Caco-2 (cell line): ENCODE measurements at regions of chr1 and their contacts with region 1.

Region 1: GRCh38 chr1:72845342-72845741 is 563.0 kb upstream of the NEGR1 start:
- DNase-seq: peak; percentile 14 to 36
- H3K4me3 ChIP-seq: no peak overlapping the region
- H3K4me3 Mint-ChIP-seq: no peak overlapping the region
- H3K27ac Mint-ChIP-seq: no peak overlapping the region
- H3K4me1 ChIP-seq: no peaks in the 10 kb centered on the region
- H3K4me1 Mint-ChIP-seq: no peaks in the 10 kb centered on the region
- H3K27me3 ChIP-seq: no peaks in the 10 kb centered on the region
- H3K27me3 Mint-ChIP-seq: peaks cover 2% of the 10 kb centered on the region
- CTCF ChIP-seq: peak; percentile 17 to 20

Region 2: DNA sequence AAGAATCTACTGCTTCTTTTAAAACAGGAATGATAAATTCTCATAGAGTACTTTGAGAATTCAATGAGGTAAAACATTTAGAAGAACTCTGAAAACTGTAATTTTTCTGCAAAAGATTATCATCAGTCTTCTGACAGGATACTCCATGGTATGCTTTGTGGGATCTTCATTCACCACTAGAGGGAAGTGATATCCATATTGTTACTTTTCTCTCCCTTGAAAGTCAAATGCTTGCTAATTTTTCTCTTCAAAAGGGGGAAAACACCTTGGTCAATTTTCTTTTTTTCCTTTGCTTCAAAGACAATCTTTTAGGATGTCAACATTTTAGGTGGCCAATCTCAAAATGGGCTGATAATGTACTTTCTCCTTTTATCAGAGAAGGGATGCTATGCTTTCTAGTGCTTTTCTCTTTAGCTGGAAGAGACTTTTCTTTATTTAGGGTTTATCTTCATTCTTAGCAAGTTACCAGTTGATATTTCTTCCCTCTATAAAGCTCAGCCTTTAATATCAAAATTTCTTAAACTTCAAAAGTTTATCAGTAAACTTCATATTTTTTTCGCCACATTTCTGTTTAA is 658.5 kb before region 1 on chr1:
- CTCF ChIA-PET with region 1: no interaction called
- POLR2A ChIA-PET with region 1: no interaction called
- intact Hi-C with region 1: loop called (anchors 10 kb)
- DNase-seq: no peak
- H3K4me3 ChIP-seq: no peak overlapping the region
- H3K4me3 Mint-ChIP-seq: no peak overlapping the region
- H3K27ac Mint-ChIP-seq: no peak overlapping the region
- H3K4me1 ChIP-seq: no peaks in the 10 kb centered on the region
- H3K4me1 Mint-ChIP-seq: no peaks in the 10 kb centered on the region
- H3K27me3 ChIP-seq: no peaks in the 10 kb centered on the region
- H3K27me3 Mint-ChIP-seq: no peaks in the 10 kb centered on the region
- CTCF ChIP-seq: peak; percentile 34 to 44

Region 3: DNA sequence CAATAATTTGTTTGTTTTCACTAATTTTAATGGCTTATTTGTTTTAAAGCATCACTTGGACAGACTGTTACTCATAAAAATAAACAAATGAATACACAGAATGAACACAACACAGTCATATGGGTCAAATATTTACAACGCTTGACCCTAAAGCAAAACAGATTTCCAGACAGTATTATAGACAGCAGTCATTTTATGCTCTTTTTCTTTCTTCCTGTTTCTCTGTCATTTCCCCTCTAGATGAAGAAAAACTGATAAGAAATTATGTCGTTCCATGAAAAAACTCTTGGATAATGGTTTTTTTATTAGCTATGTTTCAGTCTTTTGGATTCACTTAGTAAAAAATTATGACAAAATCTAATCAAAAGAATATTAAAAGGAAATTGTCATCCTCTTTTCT is 265.7 kb before region 1 on chr1:
- CTCF ChIA-PET with region 1: no interaction called
- POLR2A ChIA-PET with region 1: no interaction called
- intact Hi-C with region 1: no loop called
- DNase-seq: no peak
- H3K4me3 ChIP-seq: no peak overlapping the region
- H3K4me3 Mint-ChIP-seq: no peak overlapping the region
- H3K27ac Mint-ChIP-seq: no peak overlapping the region
- H3K4me1 ChIP-seq: no peaks in the 10 kb centered on the region
- H3K4me1 Mint-ChIP-seq: no peaks in the 10 kb centered on the region
- H3K27me3 ChIP-seq: no peaks in the 10 kb centered on the region
- H3K27me3 Mint-ChIP-seq: no peaks in the 10 kb centered on the region
- CTCF ChIP-seq: no peak

Region 4: DNA sequence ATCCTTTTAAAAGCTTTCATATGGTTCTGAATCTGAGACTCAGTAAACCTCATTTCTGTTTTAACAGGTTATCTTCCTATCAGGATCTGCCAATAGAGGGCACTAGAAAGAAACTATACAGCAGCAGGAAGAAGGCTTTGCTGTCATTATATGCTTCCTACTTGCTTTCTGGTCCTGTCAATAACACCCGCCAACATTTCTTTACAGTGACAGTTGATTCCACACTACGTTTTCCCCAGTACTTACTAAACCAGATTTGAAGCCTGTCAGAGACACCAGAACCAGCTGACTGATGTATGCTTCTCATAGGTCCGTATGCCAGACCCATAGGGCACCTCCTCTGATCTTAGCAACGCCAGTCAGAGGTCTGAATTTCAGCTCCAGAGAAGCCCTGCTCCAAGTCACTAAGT is 222.0 kb before region 1 on chr1:
- CTCF ChIA-PET with region 1: no interaction called
- POLR2A ChIA-PET with region 1: no interaction called
- intact Hi-C with region 1: loop called (anchors 5 kb)
- DNase-seq: peak in 1 of 2 experiments; percentile 17
- H3K4me3 ChIP-seq: no peak overlapping the region
- H3K4me3 Mint-ChIP-seq: no peak overlapping the region
- H3K27ac Mint-ChIP-seq: no peak overlapping the region
- H3K4me1 ChIP-seq: no peaks in the 10 kb centered on the region
- H3K4me1 Mint-ChIP-seq: no peaks in the 10 kb centered on the region
- H3K27me3 ChIP-seq: no peaks in the 10 kb centered on the region
- H3K27me3 Mint-ChIP-seq: no peaks in the 10 kb centered on the region
- CTCF ChIP-seq: peak; percentile 24 to 53

Region 5: GRCh38 chr1:72724951-72725861 is 120.1 kb before region 1 on chr1:
- CTCF ChIA-PET with region 1: no interaction called
- POLR2A ChIA-PET with region 1: no interaction called
- intact Hi-C with region 1: loop called (anchors 1 kb)
- DNase-seq: no peak
- H3K4me3 ChIP-seq: no peak overlapping the region
- H3K4me3 Mint-ChIP-seq: no peak overlapping the region
- H3K27ac Mint-ChIP-seq: no peak overlapping the region
- H3K4me1 ChIP-seq: no peaks in the 10 kb centered on the region
- H3K4me1 Mint-ChIP-seq: no peaks in the 10 kb centered on the region
- H3K27me3 ChIP-seq: no peaks in the 10 kb centered on the region
- H3K27me3 Mint-ChIP-seq: no peaks in the 10 kb centered on the region
- CTCF ChIP-seq: no peak

Region 6: GRCh38 chr1:72892461-72892860 is 47.1 kb after region 1 on chr1:
- CTCF ChIA-PET with region 1: no interaction called
- POLR2A ChIA-PET with region 1: no interaction called
- intact Hi-C with region 1: no loop called
- DNase-seq: no peak
- H3K4me3 ChIP-seq: no peak overlapping the region
- H3K4me3 Mint-ChIP-seq: no peak overlapping the region
- H3K27ac Mint-ChIP-seq: no peak overlapping the region
- H3K4me1 ChIP-seq: no peaks in the 10 kb centered on the region
- H3K4me1 Mint-ChIP-seq: no peaks in the 10 kb centered on the region
- H3K27me3 ChIP-seq: no peaks in the 10 kb centered on the region
- H3K27me3 Mint-ChIP-seq: no peaks in the 10 kb centered on the region
- CTCF ChIP-seq: no peak